Right lobe of liver (tissue), 6 donors: ENCODE measurements at regions of chrX and their contacts with region 1.

Region 1: DNA sequence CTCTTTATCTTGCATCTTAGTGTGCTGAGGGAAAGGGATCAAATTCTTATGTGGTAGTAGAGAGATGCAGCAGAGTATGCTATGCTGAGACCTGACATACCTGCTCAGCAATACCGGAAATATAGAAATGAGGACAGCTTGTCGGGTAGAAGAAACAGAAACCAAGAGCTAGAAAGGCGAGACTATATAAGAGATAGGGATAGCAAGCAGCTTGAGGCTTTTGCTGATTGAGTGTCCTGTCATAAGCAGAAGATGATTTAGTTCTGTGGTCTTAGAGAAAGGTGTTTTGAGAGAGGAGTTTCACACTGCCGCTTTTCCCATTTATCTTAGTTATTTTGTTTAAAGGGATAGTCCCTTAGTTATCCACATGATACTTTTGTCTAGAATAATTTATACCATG is 31.7 kb downstream of the USP9X start:
- DNase-seq: no peak
- ATAC-seq: peak; percentile 43 to 60 (median 50)
- H3K4me3 ChIP-seq: no peak overlapping the region
- H3K27ac ChIP-seq: no peak overlapping the region
- H3K4me1 ChIP-seq: peaks cover 0 to 7% (median 2%) of the 10 kb centered on the region in 4 donors
- H3K27me3 ChIP-seq: no peaks in the 10 kb centered on the region
- CTCF ChIP-seq: no peak
- POLR2A ChIP-seq: no peak

Region 2: GRCh38 chrX:40877887-40878286 is 239.1 kb before region 1 on chrX:
- intact Hi-C with region 1: loop called in 1 of 2 experiments (anchors 10 kb)
- DNase-seq: no peak
- ATAC-seq: peak; percentile 52 to 72 (median 62)
- H3K4me3 ChIP-seq: peak overlapping the region in 1 of 3 donors; percentile 4
- H3K27ac ChIP-seq: no peak overlapping the region
- H3K4me1 ChIP-seq: no peaks in the 10 kb centered on the region
- H3K27me3 ChIP-seq: no peaks in the 10 kb centered on the region
- CTCF ChIP-seq: peak; percentile 57 to 62 (median 62)
- POLR2A ChIP-seq: no peak

Region 3: GRCh38 chrX:41010188-41010846 is 106.6 kb before region 1 on chrX:
- intact Hi-C with region 1: no loop called
- DNase-seq: peak; percentile 75 to 84 (median 79)
- ATAC-seq: peak; percentile 88 to 94 (median 89)
- H3K4me3 ChIP-seq: peak overlapping the region in 2 of 3 donors; percentile 4 to 18
- H3K27ac ChIP-seq: peak overlapping the region; percentile 76 to 96 (median 90)
- H3K4me1 ChIP-seq: peaks cover 0 to 15% (median 0%) of the 10 kb centered on the region in 4 donors
- H3K27me3 ChIP-seq: no peaks in the 10 kb centered on the region
- CTCF ChIP-seq: peak in 1 of 4 donors; percentile 20
- POLR2A ChIP-seq: peak; percentile 80